PC-3 (cell line): ENCODE measurements at regions of chr4 and their contacts with region 1.

Region 1: DNA sequence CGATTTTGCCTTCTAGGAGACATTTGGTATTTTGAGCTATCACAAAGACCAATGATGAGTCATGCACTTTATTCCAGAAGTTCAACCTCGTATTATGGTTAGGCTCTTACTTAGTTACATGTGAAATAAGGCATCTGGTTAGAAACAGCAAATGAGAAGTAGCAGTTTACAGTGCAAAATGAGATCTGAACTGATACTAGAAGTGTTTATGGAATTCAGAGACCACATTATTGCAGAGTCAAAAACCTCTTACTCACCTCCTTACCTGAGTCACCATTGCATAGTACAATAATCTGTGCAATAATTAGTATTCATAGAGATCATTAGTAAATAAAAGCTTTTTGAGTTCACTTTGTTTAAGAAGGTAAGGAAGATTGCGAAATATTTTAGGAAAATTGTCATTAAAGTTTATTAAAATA is 38.7 kb downstream of the SEC24B start:
- DNase-seq: peak; percentile 7
- ATAC-seq: no peak; the same call in 1 of the 2 replicates
- H3K4me3 ChIP-seq: no peak overlapping the region
- H3K27ac ChIP-seq: no peak overlapping the region
- H3K4me1 ChIP-seq: peaks cover 10% of the 10 kb centered on the region; the same call in 1 of the 2 replicates
- H3K27me3 ChIP-seq: no peaks in the 10 kb centered on the region
- CTCF ChIP-seq: no peak

Region 2: GRCh38 chr4:108881190-108881589 is 591.2 kb before region 1 on chr4:
- CTCF ChIA-PET with region 1: no interaction called
- POLR2A ChIA-PET with region 1: interaction called, 32 read pairs
- intact Hi-C with region 1: no loop called
- DNase-seq: no peak
- ATAC-seq: no peak
- H3K4me3 ChIP-seq: no peak overlapping the region
- H3K27ac ChIP-seq: no peak overlapping the region
- H3K4me1 ChIP-seq: no peaks in the 10 kb centered on the region
- H3K27me3 ChIP-seq: peaks cover 9% of the 10 kb centered on the region; the same call in 1 of the 2 replicates
- CTCF ChIP-seq: no peak

Region 3: DNA sequence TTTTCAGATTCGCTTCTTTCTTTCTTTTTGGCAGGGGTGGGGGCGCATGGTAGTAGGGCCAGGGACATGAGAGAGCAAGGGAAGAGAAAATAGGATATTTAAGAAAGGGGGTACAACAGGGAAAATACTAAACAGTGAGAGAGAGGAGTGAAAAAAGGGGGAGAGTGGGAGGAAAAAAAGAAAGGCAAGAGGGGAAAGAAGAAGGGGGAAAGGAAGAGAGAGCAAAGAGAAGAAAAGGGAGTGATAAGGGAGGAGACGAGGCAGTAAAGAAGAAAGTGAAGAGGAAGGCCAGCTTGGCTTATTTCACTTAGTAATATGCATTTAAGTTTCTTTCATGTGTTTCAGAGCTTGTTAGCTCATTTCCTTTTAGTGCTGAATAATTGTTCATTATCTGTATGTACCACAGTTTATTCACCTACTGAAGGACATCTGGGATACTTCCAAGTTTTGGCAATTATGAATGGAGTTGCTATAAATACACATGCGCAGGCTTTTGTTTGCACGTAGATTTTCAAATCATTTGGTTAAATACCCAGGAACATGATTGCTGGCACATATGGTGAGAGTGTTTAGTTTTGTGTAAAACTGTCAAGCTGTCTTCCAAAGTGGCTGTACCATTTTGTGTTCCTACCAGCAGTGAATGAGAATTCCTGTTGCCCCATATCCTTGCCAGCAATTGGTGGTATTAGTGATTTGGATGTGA is 193.6 kb after region 1 on chr4:
- CTCF ChIA-PET with region 1: no interaction called
- POLR2A ChIA-PET with region 1: no interaction called
- intact Hi-C with region 1: no loop called
- DNase-seq: no peak
- ATAC-seq: no peak
- H3K4me3 ChIP-seq: no peak overlapping the region
- H3K27ac ChIP-seq: no peak overlapping the region
- H3K4me1 ChIP-seq: no peaks in the 10 kb centered on the region
- H3K27me3 ChIP-seq: no peaks in the 10 kb centered on the region
- CTCF ChIP-seq: no peak

Region 4: GRCh38 chr4:110075083-110075738 is 602.9 kb after region 1 on chr4:
- CTCF ChIA-PET with region 1: no interaction called
- POLR2A ChIA-PET with region 1: no interaction called
- intact Hi-C with region 1: no loop called
- DNase-seq: no peak
- ATAC-seq: no peak
- H3K4me3 ChIP-seq: no peak overlapping the region
- H3K27ac ChIP-seq: no peak overlapping the region
- H3K4me1 ChIP-seq: no peaks in the 10 kb centered on the region
- H3K27me3 ChIP-seq: no peaks in the 10 kb centered on the region
- CTCF ChIP-seq: no peak